ENCODE measurements at regions of chr6 and their contacts with region 1.

Region 1: GRCh38 chr6:142819603-142820337 is 125.2 kb downstream of the HIVEP2 start:
- DNase-seq: no peak
- ATAC-seq: peak; percentile 73
- H3K4me3 Mint-ChIP-seq: peak overlapping the region; percentile 93
- H3K27ac Mint-ChIP-seq: peak overlapping the region; percentile 96
- H3K4me1 Mint-ChIP-seq: peaks cover 51% of the 10 kb centered on the region
- H3K27me3 Mint-ChIP-seq: no peaks in the 10 kb centered on the region

Region 2: DNA sequence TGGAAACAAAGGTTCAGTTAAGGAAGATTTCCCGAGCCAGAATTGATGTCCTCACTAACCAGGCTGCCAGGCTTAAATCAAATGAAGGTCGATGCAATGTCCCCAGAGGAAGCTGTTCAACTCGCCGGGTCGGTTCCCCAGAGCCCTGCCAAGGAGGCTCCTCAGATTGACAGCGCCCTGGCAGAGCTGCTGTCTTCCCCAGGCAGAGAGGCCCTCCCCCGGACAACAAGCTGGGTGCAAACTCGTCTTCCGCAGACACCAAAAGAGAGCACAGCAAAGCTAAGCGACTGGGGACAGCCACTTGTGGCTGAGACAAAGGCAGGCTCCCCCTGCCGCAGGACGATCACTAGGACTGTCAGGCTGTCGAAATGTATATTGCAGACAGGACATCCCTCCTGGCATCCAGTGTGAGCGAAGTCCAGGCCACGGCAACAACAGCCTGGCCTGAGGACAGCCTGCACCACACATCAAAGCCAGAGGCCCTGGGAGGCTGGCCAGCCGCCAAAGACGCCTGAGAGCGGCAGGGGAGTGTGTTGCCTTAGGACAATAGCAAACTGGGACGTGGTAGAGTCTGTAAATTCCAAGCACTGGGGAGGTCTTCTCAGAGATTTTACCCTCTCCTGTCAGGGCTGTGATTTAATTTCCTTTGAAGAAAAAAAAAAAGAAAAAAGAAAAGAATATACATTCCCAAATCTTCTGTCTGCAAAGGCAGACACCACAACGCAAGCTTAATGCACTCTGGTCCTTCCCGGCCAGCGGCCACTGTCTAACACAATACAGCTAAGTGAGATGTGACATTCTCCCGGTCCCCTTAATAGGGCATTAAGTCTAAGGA is 26.1 kb after region 1 on chr6:
- POLR2A ChIA-PET with region 1: interaction called, 10 read pairs
- DNase-seq: peak; percentile 64
- ATAC-seq: peak; percentile 65
- H3K4me3 Mint-ChIP-seq: peak overlapping the region; percentile 80
- H3K27ac Mint-ChIP-seq: peak overlapping the region; percentile 87
- H3K4me1 Mint-ChIP-seq: peaks cover 75% of the 10 kb centered on the region
- H3K27me3 Mint-ChIP-seq: no peaks in the 10 kb centered on the region

Measured in activated naive CD8-positive, alpha-beta T cell treated with anti-CD3 and anti-CD28 coated beads, Interleukin-2, amount 10 ng/mL, durations not matched to agents 7 days and 5 days (primary cell).